ENCODE measurements at regions of chr6 and their contacts with region 1.

Region 1: GRCh38 chr6:79614754-79615261 is 16.3 kb upstream of the SH3BGRL2 start:
- DNase-seq: no peak
- H3K4me3 Mint-ChIP-seq: no peak overlapping the region
- H3K27ac Mint-ChIP-seq: no peak overlapping the region
- H3K4me1 Mint-ChIP-seq: no peaks in the 10 kb centered on the region
- H3K27me3 Mint-ChIP-seq: no peaks in the 10 kb centered on the region
- CTCF ChIP-seq: no peak

Region 2: GRCh38 chr6:79557673-79558467 is 56.9 kb before region 1 on chr6:
- CTCF ChIA-PET with region 1: no interaction called
- POLR2A ChIA-PET with region 1: no interaction called
- intact Hi-C with region 1: no loop called
- DNase-seq: no peak
- H3K4me3 Mint-ChIP-seq: no peak overlapping the region
- H3K27ac Mint-ChIP-seq: no peak overlapping the region
- H3K4me1 Mint-ChIP-seq: no peaks in the 10 kb centered on the region
- H3K27me3 Mint-ChIP-seq: no peaks in the 10 kb centered on the region
- CTCF ChIP-seq: no peak

Region 3: GRCh38 chr6:79630380-79630882 is 15.6 kb after region 1 on chr6:
- CTCF ChIA-PET with region 1: no interaction called
- POLR2A ChIA-PET with region 1: interaction called, 10 read pairs
- intact Hi-C with region 1: no loop called
- DNase-seq: no peak
- H3K4me3 Mint-ChIP-seq: peak overlapping the region; percentile 93
- H3K27ac Mint-ChIP-seq: no peak overlapping the region
- H3K4me1 Mint-ChIP-seq: peaks cover 23% of the 10 kb centered on the region
- H3K27me3 Mint-ChIP-seq: no peaks in the 10 kb centered on the region
- CTCF ChIP-seq: no peak

Region 4: DNA sequence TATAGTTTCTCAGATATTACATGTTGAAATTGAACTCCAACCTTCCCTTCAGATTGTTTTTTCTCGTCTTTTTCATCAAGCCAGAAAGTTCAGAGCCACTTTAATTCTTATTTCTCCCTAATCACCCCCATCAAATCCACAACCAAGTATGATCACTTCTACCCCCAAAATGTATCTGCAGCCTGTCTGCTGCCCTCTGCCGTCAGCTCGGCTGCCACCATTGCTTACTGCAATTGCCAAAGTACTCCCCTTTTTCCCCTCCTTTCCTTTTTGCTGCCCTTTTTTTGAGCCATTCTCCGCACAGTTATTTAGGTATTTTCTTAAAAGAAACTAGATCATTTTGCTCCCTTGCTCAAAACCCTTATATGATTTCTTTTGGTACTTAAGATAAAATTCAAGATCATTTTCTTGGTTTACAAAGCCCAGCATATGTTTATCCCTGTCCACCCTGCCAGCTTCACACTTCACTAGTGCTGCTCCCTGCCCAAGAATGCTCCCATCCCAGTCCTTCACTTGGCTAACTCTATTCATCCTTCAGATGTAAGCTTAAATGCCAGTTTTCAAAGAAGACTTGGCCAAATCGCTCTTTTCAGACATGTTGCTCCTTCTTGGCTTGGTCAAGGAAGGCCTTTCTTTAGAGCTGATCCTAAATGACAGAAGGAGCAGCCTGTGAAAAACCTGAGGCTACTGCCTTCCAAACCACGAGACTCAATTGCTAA is 80.0 kb after region 1 on chr6:
- CTCF ChIA-PET with region 1: no interaction called
- POLR2A ChIA-PET with region 1: no interaction called
- intact Hi-C with region 1: no loop called
- DNase-seq: no peak
- H3K4me3 Mint-ChIP-seq: no peak overlapping the region
- H3K27ac Mint-ChIP-seq: no peak overlapping the region
- H3K4me1 Mint-ChIP-seq: no peaks in the 10 kb centered on the region
- H3K27me3 Mint-ChIP-seq: no peaks in the 10 kb centered on the region
- CTCF ChIP-seq: no peak

Measured in MCF 10A (cell line).